ENCODE measurements at regions of chr17 and their contacts with region 1.

Region 1: GRCh38 chr17:38674749-38675615 is at the start of gene EPOP:
- DNase-seq: peak; percentile 67 to 95 (median 71)
- ATAC-seq: peak; percentile 93
- H3K4me3 ChIP-seq: peak within 1 kb of the TSS; percentile 43
- H3K4me3 Mint-ChIP-seq: peak within 1 kb of the TSS; percentile 63 to 80 (median 75)
- H3K27ac ChIP-seq: peak within 1 kb of the TSS; percentile 54
- H3K27ac Mint-ChIP-seq: peak within 1 kb of the TSS in 4 of 9 donors; percentile 17 to 69 (median 58)
- H3K4me1 ChIP-seq: peaks cover 5 to 7% of the 10 kb centered on the region in 2 donors
- H3K4me1 Mint-ChIP-seq: peaks cover 8 to 30% (median 23%) of the 10 kb centered on the region in 7 donors
- H3K27me3 ChIP-seq: peaks cover 0 to 12% of the 10 kb centered on the region in 2 donors
- H3K27me3 Mint-ChIP-seq: peaks cover 19 to 37% (median 24%) of the 10 kb centered on the region in 5 donors
- total RNA-seq, gene EPOP: 0.19 to 13.4 (median 0.34) TPM

Region 2: GRCh38 chr17:38697061-38697820 is 22.3 kb after region 1 on chr17:
- CTCF ChIA-PET with region 1: interaction called, 11 read pairs
- POLR2A ChIA-PET with region 1: interaction called, 5 read pairs
- intact Hi-C with region 1: loop called (anchors 1 kb)
- DNase-seq: peak in 4 of 9 donors; percentile 18 to 39 (median 21)
- ATAC-seq: no peak
- H3K4me3 ChIP-seq: no peak overlapping the region
- H3K4me3 Mint-ChIP-seq: peak overlapping the region in 9 of 10 donors; percentile 2 to 51 (median 19)
- H3K27ac ChIP-seq: no peak overlapping the region
- H3K27ac Mint-ChIP-seq: peak overlapping the region; percentile 53 to 87 (median 77)
- H3K4me1 ChIP-seq: peaks cover 11 to 18% of the 10 kb centered on the region in 2 donors
- H3K4me1 Mint-ChIP-seq: peaks cover 25 to 44% (median 33%) of the 10 kb centered on the region in 7 donors
- H3K27me3 ChIP-seq: no peaks in the 10 kb centered on the region
- H3K27me3 Mint-ChIP-seq: no peaks in the 10 kb centered on the region

Region 3: GRCh38 chr17:38702166-38702899 is 27.4 kb after region 1 on chr17:
- CTCF ChIA-PET with region 1: interaction called, 11 read pairs
- POLR2A ChIA-PET with region 1: interaction called, 12 read pairs
- intact Hi-C with region 1: loop called (anchors 1 kb)
- DNase-seq: peak; percentile 69 to 81 (median 75)
- ATAC-seq: peak; percentile 60
- H3K4me3 ChIP-seq: peak overlapping the region; percentile 70
- H3K4me3 Mint-ChIP-seq: peak overlapping the region; percentile 93 to 100 (median 97)
- H3K27ac ChIP-seq: peak overlapping the region; percentile 97
- H3K27ac Mint-ChIP-seq: peak overlapping the region; percentile 91 to 100 (median 98)
- H3K4me1 ChIP-seq: peaks cover 17 to 18% of the 10 kb centered on the region in 2 donors
- H3K4me1 Mint-ChIP-seq: peaks cover 26 to 56% (median 33%) of the 10 kb centered on the region in 7 donors
- H3K27me3 ChIP-seq: no peaks in the 10 kb centered on the region
- H3K27me3 Mint-ChIP-seq: no peaks in the 10 kb centered on the region

Region 4: GRCh38 chr17:38729886-38730525 is 55.0 kb after region 1 on chr17 and contains the start of gene CISD3:
- CTCF ChIA-PET with region 1: interaction called, 78 read pairs
- POLR2A ChIA-PET with region 1: interaction called, 13 read pairs
- intact Hi-C with region 1: loop called (anchors 1 kb)
- DNase-seq: peak; percentile 73 to 91 (median 84)
- ATAC-seq: peak; percentile 92
- H3K4me3 ChIP-seq: peak within 1 kb of the TSS; percentile 78
- H3K4me3 Mint-ChIP-seq: peak within 1 kb of the TSS; percentile 87 to 99 (median 95)
- H3K27ac ChIP-seq: peak within 1 kb of the TSS; percentile 81
- H3K27ac Mint-ChIP-seq: peak within 1 kb of the TSS; percentile 89 to 97 (median 93)
- H3K4me1 ChIP-seq: peaks cover 44 to 56% of the 10 kb centered on the region in 2 donors
- H3K4me1 Mint-ChIP-seq: peaks cover 40 to 91% (median 79%) of the 10 kb centered on the region in 7 donors
- H3K27me3 ChIP-seq: no peaks in the 10 kb centered on the region
- H3K27me3 Mint-ChIP-seq: peaks cover 0 to 2% (median 0%) of the 10 kb centered on the region in 5 donors
- total RNA-seq, gene CISD3: 8.0 to 39.6 (median 12.9) TPM

Region 5: DNA sequence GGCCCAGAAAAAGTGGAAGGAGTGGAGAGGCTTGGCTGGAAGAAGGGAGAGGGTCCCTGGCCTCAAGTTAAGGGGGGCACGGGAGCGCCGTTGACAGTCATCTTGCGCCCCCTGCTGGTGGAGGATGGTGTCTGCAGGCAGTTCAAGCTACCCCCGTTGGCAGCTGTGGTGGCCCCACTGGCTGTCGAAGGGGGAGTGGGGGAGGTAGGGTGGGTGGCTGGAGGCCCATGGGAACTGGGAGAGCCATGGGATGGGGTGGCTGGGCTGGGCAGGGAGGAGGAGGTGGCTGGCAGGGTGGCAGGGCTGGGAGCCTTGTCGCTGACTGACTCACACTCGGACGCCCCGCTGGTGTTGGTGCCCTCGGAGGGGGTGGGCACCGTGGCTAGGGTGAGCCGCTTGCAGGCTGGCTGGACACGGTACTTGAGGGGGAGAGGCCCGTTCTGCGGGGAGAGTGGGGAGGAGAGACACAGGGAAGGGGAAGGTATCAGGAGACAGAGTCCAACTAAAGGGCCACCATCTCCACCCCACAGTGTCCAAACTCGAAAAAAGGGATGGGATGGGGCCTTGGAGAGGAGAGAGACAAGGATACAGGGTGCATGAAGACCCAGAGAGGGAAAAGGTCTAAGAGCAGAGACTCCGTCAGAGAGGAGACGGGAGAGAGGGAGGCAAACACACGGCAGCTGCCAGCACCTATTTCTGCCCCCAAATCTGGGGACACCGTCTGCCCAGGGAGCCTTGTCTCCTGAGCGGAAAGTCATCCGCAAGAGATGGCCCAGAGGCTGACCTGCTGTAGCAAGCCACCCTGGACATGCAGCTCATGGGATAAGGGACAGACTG is 60.4 kb after region 1 on chr17:
- CTCF ChIA-PET with region 1: interaction called, 78 read pairs
- POLR2A ChIA-PET with region 1: interaction called, 9 read pairs
- intact Hi-C with region 1: loop called (anchors 1 kb)
- DNase-seq: peak; percentile 42 to 80 (median 63)
- ATAC-seq: peak; percentile 55
- H3K4me3 ChIP-seq: no peak overlapping the region
- H3K4me3 Mint-ChIP-seq: no peak overlapping the region
- H3K27ac ChIP-seq: no peak overlapping the region
- H3K27ac Mint-ChIP-seq: peak overlapping the region in 3 of 9 donors; percentile 10 to 38 (median 30)
- H3K4me1 ChIP-seq: peaks cover 15 to 16% of the 10 kb centered on the region in 2 donors
- H3K4me1 Mint-ChIP-seq: peaks cover 23 to 50% (median 45%) of the 10 kb centered on the region in 7 donors
- H3K27me3 ChIP-seq: no peaks in the 10 kb centered on the region
- H3K27me3 Mint-ChIP-seq: peaks cover 0 to 6% (median 0%) of the 10 kb centered on the region in 5 donors

Region 6: DNA sequence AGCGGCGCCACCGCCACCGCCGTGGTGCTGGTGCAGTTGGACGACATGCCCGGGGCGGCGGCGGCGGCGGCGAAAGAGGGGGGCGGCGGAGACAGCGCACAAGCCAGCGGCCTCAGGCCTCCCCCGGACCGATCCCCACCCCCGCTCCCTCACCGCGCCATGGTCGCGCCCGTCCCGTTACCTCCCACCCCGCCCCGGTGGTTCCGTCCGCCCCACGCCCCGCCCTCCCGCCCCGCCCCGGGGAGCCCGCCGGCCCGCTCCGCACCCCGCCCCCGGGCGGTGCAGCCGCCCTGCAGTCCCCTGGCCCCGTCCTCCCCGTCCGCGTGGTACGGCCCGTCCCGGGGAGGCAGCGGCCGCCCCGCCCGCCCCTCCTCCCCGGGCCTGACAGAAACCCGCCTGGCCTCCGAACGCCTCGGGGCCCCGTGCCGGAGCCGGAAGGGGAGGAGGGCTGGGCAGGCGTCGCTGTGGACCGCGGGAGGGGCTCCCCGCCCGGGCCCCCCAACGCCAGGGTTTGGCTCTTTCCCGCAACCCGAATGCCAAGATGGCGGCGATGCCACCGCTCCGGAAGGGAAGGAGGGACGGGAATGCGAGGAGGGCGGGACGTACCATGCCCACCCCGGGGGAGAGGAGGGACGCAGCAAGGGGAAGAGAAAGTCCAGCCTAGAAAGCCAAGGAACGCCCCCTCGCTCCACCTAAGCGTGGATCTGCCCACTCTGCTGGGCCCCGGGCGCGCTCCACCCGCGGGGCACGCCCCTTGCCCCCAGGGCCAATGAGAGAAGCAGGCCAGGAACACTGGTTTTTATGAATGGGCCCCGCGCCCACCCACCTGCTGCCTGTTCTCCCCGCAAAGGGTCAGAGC is 124.6 kb after region 1 on chr17 and contains the start of gene PIP4K2B:
- CTCF ChIA-PET with region 1: interaction called, 3 read pairs
- POLR2A ChIA-PET with region 1: no interaction called
- intact Hi-C with region 1: loop called in 1 of 2 experiments (anchors 2 kb)
- DNase-seq: peak; percentile 70 to 88 (median 78)
- ATAC-seq: peak; percentile 87
- H3K4me3 ChIP-seq: peak within 1 kb of the TSS; percentile 93
- H3K4me3 Mint-ChIP-seq: peak within 1 kb of the TSS; percentile 92 to 100 (median 96)
- H3K27ac ChIP-seq: peak within 1 kb of the TSS; percentile 81
- H3K27ac Mint-ChIP-seq: peak within 1 kb of the TSS; percentile 88 to 96 (median 92)
- H3K4me1 ChIP-seq: peaks cover 15 to 21% of the 10 kb centered on the region in 2 donors
- H3K4me1 Mint-ChIP-seq: peaks cover 31 to 48% (median 42%) of the 10 kb centered on the region in 7 donors
- H3K27me3 ChIP-seq: no peaks in the 10 kb centered on the region
- H3K27me3 Mint-ChIP-seq: no peaks in the 10 kb centered on the region
- total RNA-seq, gene PIP4K2B: 32.4 to 67.9 (median 49.1) TPM

Measured in naive thymus-derived CD4-positive, alpha-beta T cell (primary cell).